HCT116 (cell line): ENCODE measurements at regions of chrX and their contacts with region 1.

Region 1: GRCh38 chrX:120250522-120251271 is at the start of gene ZBTB33:
- DNase-seq: peak; percentile 88
- ATAC-seq: peak; percentile 99
- H3K4me3 ChIP-seq: peak within 1 kb of the TSS; percentile 67 to 70
- H3K27ac ChIP-seq: peak within 1 kb of the TSS; percentile 86
- H3K4me1 ChIP-seq: peaks cover 0 to 3% of the 10 kb centered on the region in 2 experiments; a peak in 1 of 4 replicates
- H3K27me3 ChIP-seq: no peaks in the 10 kb centered on the region
- CTCF ChIP-seq: peak; percentile 37 to 61 (median 41); a peak in 5 of 6 replicates
- POLR2A ChIP-seq: no peak
- RAD21 ChIP-seq: peak; percentile 29; the same call in 1 of the 2 replicates
- total RNA-seq, gene ZBTB33: 12.3 TPM

Region 2: GRCh38 chrX:119935215-119935874 is 315.4 kb before region 1 on chrX:
- CTCF ChIA-PET with region 1: no interaction called
- POLR2A ChIA-PET with region 1: no interaction called
- RAD21 ChIA-PET with region 1: no interaction called
- intact Hi-C with region 1: no loop called
- DNase-seq: no peak
- ATAC-seq: no peak
- H3K4me3 ChIP-seq: no peak overlapping the region
- H3K27ac ChIP-seq: no peak overlapping the region
- H3K4me1 ChIP-seq: no peaks in the 10 kb centered on the region
- H3K27me3 ChIP-seq: no peaks in the 10 kb centered on the region
- CTCF ChIP-seq: no peak
- POLR2A ChIP-seq: no peak
- RAD21 ChIP-seq: no peak

Region 3: DNA sequence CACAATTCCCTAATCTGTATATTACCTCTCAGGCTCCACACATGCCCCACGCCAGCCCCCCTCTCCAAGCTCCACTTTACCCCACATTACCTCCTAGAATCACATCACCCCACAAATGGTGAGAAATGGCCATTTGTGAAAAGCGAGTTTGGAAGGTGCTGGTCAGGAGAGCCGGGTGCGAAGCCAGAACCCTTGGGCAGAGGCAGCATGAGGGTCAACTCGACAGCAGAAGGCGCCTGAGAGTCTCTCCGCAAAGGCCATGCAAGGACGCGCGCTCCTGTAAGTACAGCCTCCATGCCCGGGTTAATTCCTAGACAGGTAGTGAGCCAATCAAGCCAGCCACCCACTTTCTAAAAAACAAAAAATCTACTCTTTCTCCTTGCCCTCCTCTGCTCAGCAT is 49.8 kb before region 1 on chrX:
- CTCF ChIA-PET with region 1: no interaction called
- POLR2A ChIA-PET with region 1: no interaction called
- RAD21 ChIA-PET with region 1: no interaction called
- intact Hi-C with region 1: no loop called
- DNase-seq: no peak
- ATAC-seq: no peak
- H3K4me3 ChIP-seq: no peak overlapping the region
- H3K27ac ChIP-seq: no peak overlapping the region
- H3K4me1 ChIP-seq: 0 out of 4 replicates have a peak, but pooled peaks cover 0 to 3% of the 10 kb centered on the region in 2 experiments
- H3K27me3 ChIP-seq: no peaks in the 10 kb centered on the region
- CTCF ChIP-seq: no peak
- POLR2A ChIP-seq: no peak
- RAD21 ChIP-seq: no peak

Region 4: DNA sequence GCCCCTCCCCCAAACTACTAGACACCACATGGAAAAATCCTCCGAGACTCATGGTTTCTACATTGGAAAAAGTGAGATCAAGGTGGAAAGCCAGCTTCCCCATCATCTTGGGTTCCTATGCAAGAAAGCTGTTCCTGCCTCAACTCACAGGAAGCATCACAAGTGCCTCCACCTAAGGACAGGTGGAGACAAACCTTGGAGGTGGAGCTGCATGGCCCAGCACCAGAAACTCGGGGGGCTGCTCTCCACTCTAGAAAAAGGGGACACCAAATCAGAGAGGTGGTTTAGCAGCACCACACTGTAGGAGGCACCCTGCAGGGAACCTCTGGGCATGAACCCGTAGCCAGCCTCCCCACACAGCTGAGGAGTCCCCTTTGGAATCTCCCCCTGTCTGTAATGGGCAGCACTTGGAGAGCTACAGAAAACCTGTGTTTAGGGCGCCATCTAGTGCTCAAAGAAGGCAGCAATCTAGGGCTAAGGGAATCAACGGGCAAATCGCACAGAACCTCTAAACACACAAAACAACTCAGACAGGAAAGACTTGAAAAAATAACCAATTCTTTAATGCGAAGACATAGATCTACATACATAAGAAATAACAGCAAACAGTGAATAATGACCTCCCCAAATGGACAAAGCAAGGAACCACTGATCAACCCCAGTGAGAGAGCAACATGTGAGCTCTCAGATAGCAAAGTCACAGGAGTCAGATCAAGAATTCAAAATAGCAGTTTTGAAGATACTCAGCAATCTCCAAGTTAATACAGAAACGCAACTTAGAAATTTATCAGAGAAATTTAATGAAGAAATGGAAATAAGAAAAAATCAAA is 37.0 kb before region 1 on chrX:
- CTCF ChIA-PET with region 1: interaction called, 10 read pairs
- POLR2A ChIA-PET with region 1: no interaction called
- RAD21 ChIA-PET with region 1: no interaction called
- intact Hi-C with region 1: no loop called
- DNase-seq: peak; percentile 31
- ATAC-seq: peak; percentile 91
- H3K4me3 ChIP-seq: no peak overlapping the region
- H3K27ac ChIP-seq: no peak overlapping the region
- H3K4me1 ChIP-seq: no peaks in the 10 kb centered on the region
- H3K27me3 ChIP-seq: no peaks in the 10 kb centered on the region
- CTCF ChIP-seq: peak; percentile 59 to 77 (median 67); a peak in 5 of 6 replicates
- POLR2A ChIP-seq: no peak
- RAD21 ChIP-seq: peak; percentile 63